ENCODE measurements at regions of chr10 and their contacts with region 1.

Region 1: GRCh38 chr10:98045785-98046389 is 15.5 kb upstream of the CRTAC1 start:
- DNase-seq: no peak
- H3K4me3 ChIP-seq: no peak overlapping the region
- H3K27me3 ChIP-seq: peaks cover 2% of the 10 kb centered on the region
- CTCF ChIP-seq: peak; percentile 92

Region 2: DNA sequence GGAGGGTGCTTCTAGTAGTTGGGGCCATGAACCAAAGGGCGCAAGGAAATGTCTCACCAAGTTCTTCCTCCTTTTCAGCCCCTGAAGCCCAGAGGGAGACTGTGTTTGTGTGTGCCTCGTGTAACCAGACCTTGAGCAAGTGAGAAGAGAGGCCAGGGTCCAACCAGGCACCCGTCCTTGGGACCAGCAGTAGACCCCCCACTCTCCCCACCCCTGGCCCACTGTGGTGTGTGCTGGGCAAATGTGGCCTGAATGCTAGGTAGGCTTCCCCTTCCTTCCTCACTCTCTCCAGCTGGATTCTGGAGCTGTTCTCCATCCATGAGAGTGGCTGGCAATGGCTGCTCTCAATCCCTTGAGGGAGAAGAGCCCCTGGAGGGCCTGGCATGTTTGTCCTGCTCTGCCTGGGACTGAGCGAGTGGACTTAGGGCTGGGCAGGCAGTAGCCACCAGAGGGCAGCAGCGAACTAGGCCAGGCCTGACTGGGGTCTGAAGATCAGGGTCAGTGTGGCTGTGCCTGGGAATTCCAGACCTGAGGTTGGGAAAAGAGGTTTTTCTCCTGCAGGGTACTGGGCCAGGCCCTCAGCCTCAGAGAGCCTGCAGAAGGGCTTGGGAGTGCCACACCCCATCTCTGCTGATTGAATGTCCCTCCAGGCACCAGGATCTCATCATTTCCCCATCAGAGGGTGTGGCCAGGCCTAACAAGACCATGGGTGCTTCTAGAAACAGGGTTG is 286.6 kb before region 1 on chr10:
- CTCF ChIA-PET with region 1: interaction called, 12 read pairs
- POLR2A ChIA-PET with region 1: no interaction called
- DNase-seq: no peak
- H3K4me3 ChIP-seq: no peak overlapping the region
- H3K27me3 ChIP-seq: no peaks in the 10 kb centered on the region
- CTCF ChIP-seq: peak; percentile 97

Region 3: GRCh38 chr10:97898429-97898828 is 147.5 kb before region 1 on chr10:
- CTCF ChIA-PET with region 1: no interaction called
- POLR2A ChIA-PET with region 1: no interaction called
- DNase-seq: no peak
- H3K4me3 ChIP-seq: no peak overlapping the region
- H3K27me3 ChIP-seq: peaks cover 5% of the 10 kb centered on the region
- CTCF ChIP-seq: no peak

Region 4: GRCh38 chr10:97914837-97915211 is 131.1 kb before region 1 on chr10:
- CTCF ChIA-PET with region 1: interaction called, 70 read pairs
- POLR2A ChIA-PET with region 1: no interaction called
- DNase-seq: no peak
- H3K4me3 ChIP-seq: no peak overlapping the region
- H3K27me3 ChIP-seq: peaks cover 5% of the 10 kb centered on the region
- CTCF ChIP-seq: peak; percentile 92

Region 5: GRCh38 chr10:98001736-98002135 is 44.2 kb before region 1 on chr10:
- CTCF ChIA-PET with region 1: no interaction called
- POLR2A ChIA-PET with region 1: no interaction called
- DNase-seq: no peak
- H3K4me3 ChIP-seq: no peak overlapping the region
- H3K27me3 ChIP-seq: no peaks in the 10 kb centered on the region
- CTCF ChIP-seq: no peak

Region 6: GRCh38 chr10:98028168-98028770 is 17.6 kb before region 1 on chr10:
- CTCF ChIA-PET with region 1: interaction called, 30 read pairs
- POLR2A ChIA-PET with region 1: no interaction called
- DNase-seq: no peak
- H3K4me3 ChIP-seq: no peak overlapping the region
- H3K27me3 ChIP-seq: peaks cover 37% of the 10 kb centered on the region
- CTCF ChIP-seq: peak; percentile 58

Region 7: GRCh38 chr10:98062424-98062823 is 16.5 kb after region 1 on chr10:
- CTCF ChIA-PET with region 1: interaction called, 16 read pairs
- POLR2A ChIA-PET with region 1: no interaction called
- DNase-seq: no peak
- H3K4me3 ChIP-seq: no peak overlapping the region
- H3K27me3 ChIP-seq: no peaks in the 10 kb centered on the region
- CTCF ChIP-seq: no peak

Region 8: DNA sequence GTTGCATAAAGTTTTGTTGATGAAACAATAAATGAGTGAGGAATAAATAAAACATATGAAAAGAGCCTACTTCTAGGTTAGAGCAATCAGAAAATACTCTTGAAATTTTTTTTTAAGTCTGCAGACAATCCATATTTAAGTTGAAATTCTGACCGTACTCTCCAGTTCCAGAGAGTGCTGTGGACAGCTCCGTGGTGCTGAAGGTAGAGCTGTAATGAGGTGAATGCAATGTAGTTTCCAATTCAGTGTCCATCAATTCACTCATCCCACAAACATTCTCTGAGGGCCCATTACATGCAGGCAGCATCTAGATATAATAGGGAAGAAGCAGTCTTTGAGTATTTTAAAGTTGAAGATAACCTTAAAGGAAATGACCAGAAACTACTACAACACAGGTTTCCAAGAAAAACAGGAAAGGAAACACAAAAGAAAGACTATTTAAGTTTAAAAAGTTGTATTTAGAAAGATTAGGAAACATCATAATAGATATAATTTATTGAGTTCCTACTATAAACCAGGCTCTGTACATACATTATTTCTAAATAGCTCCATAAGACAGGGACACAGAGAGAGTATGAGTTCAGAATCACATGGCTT is 28.5 kb after region 1 on chr10:
- CTCF ChIA-PET with region 1: interaction called, 10 read pairs
- POLR2A ChIA-PET with region 1: no interaction called
- DNase-seq: no peak
- H3K4me3 ChIP-seq: no peak overlapping the region
- H3K27me3 ChIP-seq: no peaks in the 10 kb centered on the region
- CTCF ChIP-seq: no peak

Measured in BJ (cell line).